GM12878 (cell line): ENCODE measurements at regions of chr7 and their contacts with region 1.

Region 1: DNA sequence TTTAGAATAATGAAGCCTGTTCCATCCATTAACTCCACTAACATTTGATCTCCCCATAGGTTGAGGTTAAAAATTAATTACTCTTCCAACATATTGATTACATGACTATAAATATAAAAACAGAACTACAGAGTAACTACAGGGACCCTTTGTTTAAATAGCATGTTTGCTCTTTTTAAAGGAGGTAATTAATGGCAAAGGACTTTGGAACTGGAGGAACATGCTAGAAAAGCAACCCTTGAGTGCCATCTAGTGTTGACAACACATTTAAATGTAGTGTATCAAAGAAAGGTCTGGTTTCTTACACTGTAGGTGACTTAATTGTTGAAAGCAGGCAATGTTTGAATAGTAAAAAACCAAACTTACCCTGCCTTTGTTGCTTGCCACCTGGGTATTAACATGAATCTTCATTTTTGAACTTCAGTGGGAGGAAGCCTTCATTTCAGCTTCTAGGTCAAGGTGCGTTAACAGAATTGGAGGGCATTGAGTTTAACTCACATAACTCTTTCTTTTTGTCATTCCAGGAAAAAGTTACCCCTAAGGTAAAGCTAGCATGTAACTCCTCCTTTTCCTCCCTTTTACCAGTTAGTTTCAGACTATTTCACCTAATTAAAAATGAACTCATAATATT is 52.6 kb upstream of the CAPZA2 start:
- DNase-seq: no peak
- ATAC-seq: peak; percentile 92
- H3K4me3 ChIP-seq: no peak overlapping the region
- H3K27ac ChIP-seq: no peak overlapping the region
- H3K4me1 ChIP-seq: no peaks in the 10 kb centered on the region
- H3K27me3 ChIP-seq: no peaks in the 10 kb centered on the region; a peak in 1 of 4 replicates
- CTCF ChIP-seq: peak; percentile 49 to 75 (median 56); a peak in 5 of 6 replicates
- EP300 ChIP-seq: no peak
- POLR2A ChIP-seq: no peak
- RAD21 ChIP-seq: peak; percentile 82

Region 2: DNA sequence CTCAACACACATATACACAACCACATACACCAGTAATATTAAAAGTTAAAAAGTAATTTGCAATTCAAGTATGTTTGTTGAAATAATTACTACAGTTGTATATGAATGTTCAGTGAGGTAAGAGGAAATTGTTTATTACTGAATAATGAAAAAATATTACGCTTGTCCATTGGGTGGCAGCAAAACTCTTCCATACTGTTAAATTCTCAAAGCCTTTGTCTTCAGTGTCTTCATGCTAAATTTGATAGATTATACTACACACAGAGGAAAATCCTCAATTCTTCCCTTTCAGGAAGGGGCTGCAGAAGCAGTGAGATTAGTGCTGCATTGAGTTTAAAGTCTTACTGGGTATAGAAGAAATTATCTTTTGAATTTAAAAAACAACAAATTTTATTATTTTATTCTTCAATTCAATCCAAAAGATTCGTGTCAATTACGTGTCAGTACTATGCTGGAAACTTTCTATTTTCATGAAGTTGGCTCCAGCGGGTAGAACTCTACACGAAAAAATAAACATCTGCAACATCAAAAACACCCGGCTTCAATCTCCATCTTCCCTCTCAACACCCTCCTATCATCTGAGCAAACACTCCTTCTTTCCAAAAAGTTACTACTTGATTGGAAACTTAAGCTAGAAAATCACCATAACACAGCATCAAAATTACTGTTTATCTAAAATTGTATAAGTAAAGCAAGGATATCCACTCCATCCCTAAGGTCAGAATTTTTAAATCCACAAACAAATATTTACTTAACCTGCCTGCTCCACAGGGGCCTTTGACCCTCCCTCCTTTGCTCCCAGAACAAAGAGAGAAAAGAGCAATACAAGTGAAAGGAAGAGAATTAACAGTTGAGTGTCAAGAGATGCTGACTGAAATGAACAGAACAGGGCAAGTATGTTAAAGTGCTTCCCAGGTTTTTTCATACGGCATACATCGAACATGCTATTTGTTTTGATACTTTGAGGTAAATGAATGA is 636.4 kb before region 1 on chr7:
- CTCF ChIA-PET with region 1: no interaction called
- POLR2A ChIA-PET with region 1: no interaction called
- RAD21 ChIA-PET with region 1: interaction called, 3 read pairs
- SMC1A ChIA-PET with region 1: no interaction called
- in situ Hi-C with region 1: loop called (anchors 10 kb)
- intact Hi-C with region 1: loop called (anchors 5 kb)
- DNase-seq: no peak
- ATAC-seq: peak; percentile 74
- H3K4me3 ChIP-seq: no peak overlapping the region
- H3K27ac ChIP-seq: no peak overlapping the region
- H3K4me1 ChIP-seq: no peaks in the 10 kb centered on the region
- H3K27me3 ChIP-seq: no peaks in the 10 kb centered on the region
- CTCF ChIP-seq: peak; percentile 28 to 67 (median 31); a peak in 4 of 6 replicates
- EP300 ChIP-seq: no peak
- POLR2A ChIP-seq: no peak
- RAD21 ChIP-seq: peak; percentile 76

Region 3: GRCh38 chr7:116258734-116259133 is 551.0 kb before region 1 on chr7:
- CTCF ChIA-PET with region 1: interaction called, 7 read pairs
- POLR2A ChIA-PET with region 1: no interaction called
- RAD21 ChIA-PET with region 1: no interaction called
- SMC1A ChIA-PET with region 1: interaction called, 3 read pairs
- in situ Hi-C with region 1: no loop called
- intact Hi-C with region 1: loop called (anchors 2 kb)
- DNase-seq: peak; percentile 23
- ATAC-seq: peak; percentile 59
- H3K4me3 ChIP-seq: no peak overlapping the region
- H3K27ac ChIP-seq: no peak overlapping the region
- H3K4me1 ChIP-seq: no peaks in the 10 kb centered on the region
- H3K27me3 ChIP-seq: no peaks in the 10 kb centered on the region
- CTCF ChIP-seq: peak; percentile 53 to 76 (median 65); a peak in 5 of 6 replicates
- EP300 ChIP-seq: no peak
- POLR2A ChIP-seq: no peak
- RAD21 ChIP-seq: peak; percentile 92

Region 4: GRCh38 chr7:116265881-116266280 is 543.9 kb before region 1 on chr7:
- CTCF ChIA-PET with region 1: no interaction called
- POLR2A ChIA-PET with region 1: no interaction called
- RAD21 ChIA-PET with region 1: no interaction called
- SMC1A ChIA-PET with region 1: no interaction called
- in situ Hi-C with region 1: loop called (anchors 5 kb)
- intact Hi-C with region 1: no loop called
- DNase-seq: no peak
- ATAC-seq: no peak
- H3K4me3 ChIP-seq: no peak overlapping the region
- H3K27ac ChIP-seq: no peak overlapping the region
- H3K4me1 ChIP-seq: no peaks in the 10 kb centered on the region
- H3K27me3 ChIP-seq: peaks cover 0 to 2% of the 10 kb centered on the region in 2 experiments; a peak in 1 of 4 replicates
- CTCF ChIP-seq: no peak
- EP300 ChIP-seq: no peak
- POLR2A ChIP-seq: no peak
- RAD21 ChIP-seq: no peak

Region 5: DNA sequence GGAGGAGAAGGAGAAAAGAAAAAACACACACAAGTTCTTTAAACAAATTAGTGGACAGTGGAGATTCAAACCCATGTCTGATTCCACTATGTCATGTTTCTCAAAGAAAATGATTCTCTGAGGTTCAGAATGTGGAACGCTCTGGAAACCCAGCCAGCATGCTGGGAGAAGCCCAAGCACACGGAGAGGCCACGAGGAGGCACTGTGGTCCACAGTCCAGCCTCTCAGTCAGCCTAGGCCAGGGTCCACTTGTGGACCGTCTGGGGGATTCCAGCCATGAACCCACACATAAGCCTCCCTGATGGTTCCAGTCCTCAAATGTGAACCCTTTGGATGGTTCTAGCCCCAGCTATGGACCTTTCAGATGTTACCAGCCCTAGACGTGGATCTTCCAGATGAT is 211.5 kb before region 1 on chr7:
- CTCF ChIA-PET with region 1: interaction called, 118 read pairs
- POLR2A ChIA-PET with region 1: no interaction called
- RAD21 ChIA-PET with region 1: interaction called, 3 read pairs
- SMC1A ChIA-PET with region 1: interaction called, 4 read pairs
- in situ Hi-C with region 1: loop called (anchors 5 kb)
- intact Hi-C with region 1: no loop called
- DNase-seq: no peak
- ATAC-seq: peak; percentile 76
- H3K4me3 ChIP-seq: no peak overlapping the region
- H3K27ac ChIP-seq: no peak overlapping the region
- H3K4me1 ChIP-seq: no peaks in the 10 kb centered on the region
- H3K27me3 ChIP-seq: peaks cover 0 to 5% of the 10 kb centered on the region in 2 experiments; a peak in 1 of 4 replicates
- CTCF ChIP-seq: peak in 2 of 3 experiments; percentile 41 to 48; a peak in 4 of 6 replicates
- EP300 ChIP-seq: no peak
- POLR2A ChIP-seq: no peak
- RAD21 ChIP-seq: peak; percentile 48; the same call in 1 of the 2 replicates

Region 6: GRCh38 chr7:116671681-116672595 is 137.8 kb before region 1 on chr7 and contains the start of gene MET:
- CTCF ChIA-PET with region 1: no interaction called
- POLR2A ChIA-PET with region 1: no interaction called
- RAD21 ChIA-PET with region 1: no interaction called
- SMC1A ChIA-PET with region 1: interaction called, 3 read pairs
- in situ Hi-C with region 1: no loop called
- intact Hi-C with region 1: loop called (anchors 1 kb)
- DNase-seq: no peak
- ATAC-seq: peak; percentile 90
- H3K4me3 ChIP-seq: peak within 1 kb of the TSS; percentile 49; the same call in 1 of the 2 replicates
- H3K27ac ChIP-seq: no peak within 1 kb of the TSS
- H3K4me1 ChIP-seq: 0 out of 2 replicates have a peak, but pooled peaks cover 3% of the 10 kb centered on the region
- H3K27me3 ChIP-seq: peaks cover 8 to 11% of the 10 kb centered on the region in 2 experiments
- CTCF ChIP-seq: peak; percentile 32 to 46 (median 45); a peak in 5 of 6 replicates
- EP300 ChIP-seq: no peak
- POLR2A ChIP-seq: no peak
- RAD21 ChIP-seq: peak; percentile 59
- polyA plus RNA-seq, gene MET: not detected